ENCODE measurements at regions of chr7 and their contacts with region 1.

Region 1: DNA sequence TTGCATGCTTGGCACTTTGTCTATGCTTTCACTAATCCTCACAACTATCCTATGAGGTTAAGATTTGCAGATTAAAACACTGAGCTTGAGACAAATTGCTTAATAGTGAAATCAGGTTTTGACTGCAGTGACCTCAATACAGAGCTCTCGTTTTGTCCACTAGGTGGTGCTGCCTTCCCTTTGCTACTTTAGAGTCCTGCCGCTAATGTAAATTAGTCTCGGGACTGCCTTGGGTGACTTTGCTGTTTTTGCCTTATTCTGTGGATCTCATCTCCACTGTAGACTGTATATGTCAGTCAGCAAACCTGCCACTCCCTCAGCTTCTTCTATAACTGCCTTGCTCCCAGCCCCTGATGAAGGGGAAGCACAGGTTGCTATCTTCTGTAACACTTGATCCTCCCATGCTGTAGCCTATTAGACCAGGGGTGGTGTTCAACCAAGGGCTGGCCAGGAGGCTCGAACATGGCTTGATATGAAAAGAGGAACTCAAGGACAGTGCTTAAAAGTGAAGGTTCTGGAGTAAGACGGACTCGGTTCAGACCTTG is 26.0 kb downstream of the ASB4 start:
- DNase-seq: peak; percentile 79
- ATAC-seq: peak; percentile 89
- H3K4me3 ChIP-seq: no peak overlapping the region
- H3K4me3 Mint-ChIP-seq: peak overlapping the region; percentile 37
- H3K27ac ChIP-seq: no peak overlapping the region
- H3K27ac Mint-ChIP-seq: no peak overlapping the region
- H3K4me1 ChIP-seq: peaks cover 5% of the 10 kb centered on the region in 2 donors
- H3K4me1 Mint-ChIP-seq: peaks cover 4% of the 10 kb centered on the region
- H3K27me3 ChIP-seq: peaks cover 0 to 6% (median 0%) of the 10 kb centered on the region in 4 experiments
- H3K27me3 Mint-ChIP-seq: no peaks in the 10 kb centered on the region
- CTCF ChIP-seq: peak; percentile 94

Region 2: DNA sequence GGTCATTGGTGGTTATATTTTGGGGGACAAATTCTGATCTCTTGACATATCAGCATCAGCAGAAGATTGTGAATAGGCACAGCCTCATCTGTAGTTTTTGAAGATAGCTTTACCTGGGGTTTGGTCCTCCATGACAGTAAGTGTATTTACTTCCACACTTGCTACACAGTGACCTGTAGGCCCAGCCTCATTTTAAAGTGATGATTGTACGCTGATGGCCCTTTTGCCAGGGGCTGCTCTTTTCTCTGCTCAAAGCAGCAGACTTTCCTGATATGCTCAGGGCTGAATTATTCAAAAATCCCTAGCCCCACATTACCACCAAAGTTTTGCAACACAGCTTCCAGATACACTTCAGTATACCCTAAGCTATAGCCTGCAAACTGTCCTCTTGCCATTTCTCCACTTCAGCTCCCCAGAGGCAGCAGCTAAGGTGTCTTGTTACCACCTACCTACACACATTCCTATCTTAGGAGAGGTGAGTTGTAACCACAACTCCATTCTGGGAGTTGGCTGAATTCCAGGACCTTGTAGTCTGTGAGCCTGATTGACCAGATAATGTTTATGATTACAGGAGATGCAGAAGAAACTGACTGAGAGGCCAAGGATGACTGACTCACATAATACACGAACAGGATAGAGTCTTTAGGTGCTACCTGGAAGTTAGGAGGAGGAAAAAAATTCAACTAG is 20.0 kb before region 1 on chr7:
- CTCF ChIA-PET with region 1: interaction called, 35 read pairs
- POLR2A ChIA-PET with region 1: no interaction called
- intact Hi-C with region 1: no loop called
- DNase-seq: no peak
- ATAC-seq: no peak
- H3K4me3 ChIP-seq: no peak overlapping the region
- H3K4me3 Mint-ChIP-seq: no peak overlapping the region
- H3K27ac ChIP-seq: no peak overlapping the region
- H3K27ac Mint-ChIP-seq: no peak overlapping the region
- H3K4me1 ChIP-seq: no peaks in the 10 kb centered on the region
- H3K4me1 Mint-ChIP-seq: no peaks in the 10 kb centered on the region
- H3K27me3 ChIP-seq: peaks cover 0 to 3% (median 0%) of the 10 kb centered on the region in 4 experiments
- H3K27me3 Mint-ChIP-seq: peaks cover 10% of the 10 kb centered on the region
- CTCF ChIP-seq: no peak

Region 3: DNA sequence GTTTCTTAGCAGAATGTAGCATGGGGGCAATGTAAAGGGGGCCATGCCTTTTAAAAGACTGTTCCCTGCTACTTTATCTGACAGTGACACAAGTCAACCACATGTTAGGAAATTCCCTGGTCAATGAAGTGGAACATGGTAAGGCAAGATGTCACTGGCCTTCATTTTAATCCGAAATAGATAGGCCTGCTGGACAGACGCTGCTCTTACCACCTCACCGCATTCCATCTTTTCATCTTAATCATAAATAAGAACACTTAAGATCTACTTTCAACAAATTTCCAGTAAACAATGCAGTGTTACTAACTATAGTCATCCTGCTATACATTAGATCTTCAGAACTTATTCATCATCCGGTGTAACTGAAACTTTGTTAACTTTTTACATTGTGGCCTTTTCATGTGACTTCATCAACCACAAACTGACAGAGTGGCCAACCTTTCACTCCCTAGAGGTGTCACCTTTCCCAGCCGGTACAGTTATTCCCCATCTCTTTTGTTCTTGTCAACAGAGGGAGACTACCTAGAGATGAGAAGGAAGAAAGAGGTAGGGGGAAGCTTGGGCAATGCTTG is 10.4 kb before region 1 on chr7:
- CTCF ChIA-PET with region 1: interaction called, 18 read pairs
- POLR2A ChIA-PET with region 1: no interaction called
- intact Hi-C with region 1: no loop called
- DNase-seq: no peak
- ATAC-seq: peak; percentile 17
- H3K4me3 ChIP-seq: no peak overlapping the region
- H3K4me3 Mint-ChIP-seq: peak overlapping the region; percentile 8
- H3K27ac ChIP-seq: no peak overlapping the region
- H3K27ac Mint-ChIP-seq: peak overlapping the region; percentile 27
- H3K4me1 ChIP-seq: peaks cover 0 to 5% of the 10 kb centered on the region in 2 donors
- H3K4me1 Mint-ChIP-seq: peaks cover 8% of the 10 kb centered on the region
- H3K27me3 ChIP-seq: no peaks in the 10 kb centered on the region
- H3K27me3 Mint-ChIP-seq: peaks cover 10% of the 10 kb centered on the region
- CTCF ChIP-seq: no peak

Region 4: GRCh38 chr7:95527033-95527775 is 15.4 kb after region 1 on chr7:
- CTCF ChIA-PET with region 1: interaction called, 230 read pairs
- POLR2A ChIA-PET with region 1: no interaction called
- intact Hi-C with region 1: loop called (anchors 1 kb)
- DNase-seq: peak; percentile 69
- ATAC-seq: peak; percentile 69
- H3K4me3 ChIP-seq: no peak overlapping the region
- H3K4me3 Mint-ChIP-seq: no peak overlapping the region
- H3K27ac ChIP-seq: no peak overlapping the region
- H3K27ac Mint-ChIP-seq: no peak overlapping the region
- H3K4me1 ChIP-seq: no peaks in the 10 kb centered on the region
- H3K4me1 Mint-ChIP-seq: peaks cover 3% of the 10 kb centered on the region
- H3K27me3 ChIP-seq: no peaks in the 10 kb centered on the region
- H3K27me3 Mint-ChIP-seq: peaks cover 8% of the 10 kb centered on the region
- CTCF ChIP-seq: peak; percentile 91

Region 5: DNA sequence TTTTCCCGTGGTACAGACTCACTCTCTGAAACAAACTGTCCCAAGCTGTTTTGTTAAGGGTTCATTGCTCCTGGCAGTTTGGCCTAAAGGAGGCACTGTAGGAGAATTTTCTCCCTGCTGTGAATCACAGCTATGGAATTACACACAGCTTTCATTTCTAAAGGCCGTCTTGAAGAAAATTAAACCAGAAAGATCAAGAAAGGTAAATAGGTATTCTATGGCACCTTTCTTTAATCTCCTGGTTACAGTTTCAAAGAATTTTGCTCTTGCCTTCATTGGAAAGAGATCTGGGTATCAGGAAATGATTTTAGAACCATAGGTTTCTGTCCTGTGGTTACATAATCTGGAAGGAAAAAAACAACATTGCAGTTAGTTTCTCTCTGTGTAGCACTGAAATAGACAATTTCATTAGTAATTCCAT is 33.3 kb after region 1 on chr7:
- CTCF ChIA-PET with region 1: interaction called, 49 read pairs
- POLR2A ChIA-PET with region 1: no interaction called
- intact Hi-C with region 1: no loop called
- DNase-seq: peak; percentile 26
- ATAC-seq: no peak
- H3K4me3 ChIP-seq: no peak overlapping the region
- H3K4me3 Mint-ChIP-seq: peak overlapping the region; percentile 0
- H3K27ac ChIP-seq: no peak overlapping the region
- H3K27ac Mint-ChIP-seq: no peak overlapping the region
- H3K4me1 ChIP-seq: peaks cover 3 to 8% of the 10 kb centered on the region in 2 donors
- H3K4me1 Mint-ChIP-seq: peaks cover 9% of the 10 kb centered on the region
- H3K27me3 ChIP-seq: no peaks in the 10 kb centered on the region
- H3K27me3 Mint-ChIP-seq: peaks cover 3% of the 10 kb centered on the region
- CTCF ChIP-seq: no peak

Region 6: GRCh38 chr7:95684037-95684436 is 172.2 kb after region 1 on chr7:
- CTCF ChIA-PET with region 1: interaction called, 695 read pairs
- POLR2A ChIA-PET with region 1: no interaction called
- intact Hi-C with region 1: loop called (anchors 1 kb)
- DNase-seq: peak; percentile 41
- ATAC-seq: no peak
- H3K4me3 ChIP-seq: no peak overlapping the region
- H3K4me3 Mint-ChIP-seq: no peak overlapping the region
- H3K27ac ChIP-seq: no peak overlapping the region
- H3K27ac Mint-ChIP-seq: no peak overlapping the region
- H3K4me1 ChIP-seq: no peaks in the 10 kb centered on the region
- H3K4me1 Mint-ChIP-seq: peaks cover 1% of the 10 kb centered on the region
- H3K27me3 ChIP-seq: no peaks in the 10 kb centered on the region
- H3K27me3 Mint-ChIP-seq: no peaks in the 10 kb centered on the region
- CTCF ChIP-seq: no peak

Region 7: GRCh38 chr7:95871078-95871782 is 359.4 kb after region 1 on chr7:
- CTCF ChIA-PET with region 1: interaction called, 15 read pairs
- POLR2A ChIA-PET with region 1: no interaction called
- intact Hi-C with region 1: no loop called
- DNase-seq: peak; percentile 18
- ATAC-seq: no peak
- H3K4me3 ChIP-seq: no peak overlapping the region
- H3K4me3 Mint-ChIP-seq: no peak overlapping the region
- H3K27ac ChIP-seq: no peak overlapping the region
- H3K27ac Mint-ChIP-seq: no peak overlapping the region
- H3K4me1 ChIP-seq: no peaks in the 10 kb centered on the region
- H3K4me1 Mint-ChIP-seq: no peaks in the 10 kb centered on the region
- H3K27me3 ChIP-seq: peaks cover 0 to 4% (median 0%) of the 10 kb centered on the region in 4 experiments
- H3K27me3 Mint-ChIP-seq: peaks cover 19% of the 10 kb centered on the region
- CTCF ChIP-seq: peak; percentile 52